ENCODE measurements at regions of chr5 and their contacts with region 1.

Region 1: GRCh38 chr5:171913987-171914273 is 92.5 kb downstream of the FBXW11 start:
- DNase-seq: no peak
- ATAC-seq: no peak
- H3K4me3 Mint-ChIP-seq: no peak overlapping the region
- H3K27ac Mint-ChIP-seq: peak overlapping the region; percentile 75
- H3K4me1 Mint-ChIP-seq: peaks cover 52% of the 10 kb centered on the region
- H3K27me3 Mint-ChIP-seq: no peaks in the 10 kb centered on the region
- CTCF ChIP-seq: no peak

Region 2: GRCh38 chr5:171806976-171807747 is 106.8 kb before region 1 on chr5:
- CTCF ChIA-PET with region 1: no interaction called
- POLR2A ChIA-PET with region 1: no interaction called
- intact Hi-C with region 1: no loop called
- DNase-seq: no peak
- ATAC-seq: no peak
- H3K4me3 Mint-ChIP-seq: peak overlapping the region; percentile 26
- H3K27ac Mint-ChIP-seq: no peak overlapping the region
- H3K4me1 Mint-ChIP-seq: peaks cover 3% of the 10 kb centered on the region
- H3K27me3 Mint-ChIP-seq: peaks cover 31% of the 10 kb centered on the region
- CTCF ChIP-seq: no peak

Region 3: DNA sequence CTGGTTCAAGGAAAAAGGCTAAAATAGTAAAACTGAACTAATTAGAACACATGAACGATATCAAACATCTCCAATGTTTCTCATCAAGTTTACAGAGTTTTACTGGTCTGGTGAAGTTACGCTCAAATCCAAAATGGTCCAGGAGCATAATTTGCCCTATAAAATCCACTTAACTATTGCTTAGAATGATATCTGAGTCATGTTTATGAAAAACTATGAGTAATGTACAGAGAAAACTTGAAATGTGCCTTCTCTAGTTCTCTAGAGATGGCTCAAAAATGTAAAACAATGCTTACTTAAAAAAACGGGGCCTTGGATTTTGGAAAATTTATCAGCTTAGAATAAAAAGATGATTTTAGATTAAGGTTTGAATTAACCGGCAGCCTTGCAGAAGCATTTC is 15.5 kb before region 1 on chr5:
- CTCF ChIA-PET with region 1: interaction called, 11 read pairs
- POLR2A ChIA-PET with region 1: no interaction called
- intact Hi-C with region 1: no loop called
- DNase-seq: no peak
- ATAC-seq: no peak
- H3K4me3 Mint-ChIP-seq: no peak overlapping the region
- H3K27ac Mint-ChIP-seq: no peak overlapping the region
- H3K4me1 Mint-ChIP-seq: peaks cover 55% of the 10 kb centered on the region
- H3K27me3 Mint-ChIP-seq: no peaks in the 10 kb centered on the region
- CTCF ChIP-seq: no peak

Region 4: DNA sequence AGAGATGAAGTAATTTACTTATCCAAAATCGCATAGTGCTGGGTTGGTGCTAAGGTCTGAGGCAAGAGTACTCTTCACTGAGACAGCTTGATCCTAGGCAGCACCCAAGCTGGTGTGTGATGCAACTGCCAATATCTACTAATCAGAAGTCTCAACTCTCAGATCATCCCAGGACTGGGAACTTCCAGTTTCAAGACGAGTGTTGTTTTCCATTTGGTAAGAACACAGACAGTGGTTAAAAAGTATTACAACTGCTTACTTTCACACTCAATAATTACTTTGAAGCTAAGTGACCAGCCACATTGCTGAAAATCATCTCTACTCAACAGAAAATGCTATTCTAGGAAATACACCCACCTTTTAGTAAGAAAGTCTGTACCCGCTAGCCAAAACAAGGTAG is 47.2 kb after region 1 on chr5:
- CTCF ChIA-PET with region 1: interaction called, 15 read pairs
- POLR2A ChIA-PET with region 1: no interaction called
- intact Hi-C with region 1: loop called (anchors 5 kb)
- DNase-seq: peak; percentile 81
- ATAC-seq: peak; percentile 67
- H3K4me3 Mint-ChIP-seq: peak overlapping the region; percentile 47
- H3K27ac Mint-ChIP-seq: peak overlapping the region; percentile 86
- H3K4me1 Mint-ChIP-seq: peaks cover 90% of the 10 kb centered on the region
- H3K27me3 Mint-ChIP-seq: no peaks in the 10 kb centered on the region
- CTCF ChIP-seq: no peak

Region 5: DNA sequence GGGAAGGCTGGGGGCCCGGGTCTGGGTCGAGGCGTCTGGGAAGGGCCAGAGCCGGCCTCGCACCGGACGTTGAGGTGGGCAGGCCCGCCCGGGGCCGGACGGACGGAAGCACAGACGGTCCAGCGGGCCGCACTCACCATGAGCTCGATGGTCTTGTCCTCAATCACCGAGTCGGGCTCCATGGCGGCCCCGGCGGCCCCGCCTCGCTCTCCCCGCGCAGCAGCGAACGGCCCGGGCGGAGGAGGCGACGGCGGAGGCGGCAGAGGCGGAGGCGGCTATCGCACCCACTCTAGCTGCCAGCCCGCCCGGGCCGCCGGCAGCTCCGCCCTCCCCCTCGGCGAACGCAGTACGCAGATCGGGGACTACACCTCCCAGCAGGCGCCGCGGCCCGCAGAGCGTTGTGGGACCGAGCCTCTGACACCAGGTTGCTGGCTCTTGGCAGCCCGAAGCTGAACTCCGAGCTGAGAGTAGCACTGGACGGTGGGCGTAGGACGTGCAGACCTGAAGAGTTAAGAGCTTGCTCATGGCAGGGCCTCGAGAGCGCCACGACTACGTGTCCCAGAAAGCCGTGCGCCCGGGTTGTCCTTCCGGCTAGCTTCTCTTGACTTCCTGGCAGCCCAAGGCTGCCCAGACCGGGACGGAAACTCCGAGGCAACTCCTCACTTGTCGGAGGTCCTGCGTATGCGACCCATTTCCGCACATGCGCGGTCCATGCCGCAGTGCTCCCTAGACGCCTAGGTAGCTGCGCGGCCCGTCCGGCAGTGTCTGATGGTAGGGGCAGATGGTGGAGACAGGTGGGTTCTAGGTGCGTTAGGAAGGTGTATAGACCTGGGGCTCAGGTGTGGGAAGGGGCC is 92.6 kb after region 1 on chr5 and contains the start of gene FBXW11:
- CTCF ChIA-PET with region 1: interaction called, 77 read pairs
- POLR2A ChIA-PET with region 1: interaction called, 23 read pairs
- intact Hi-C with region 1: loop called (anchors 5 kb)
- DNase-seq: peak; percentile 97
- ATAC-seq: peak; percentile 84
- H3K4me3 Mint-ChIP-seq: peak within 1 kb of the TSS; percentile 98
- H3K27ac Mint-ChIP-seq: peak within 1 kb of the TSS; percentile 97
- H3K4me1 Mint-ChIP-seq: peaks cover 53% of the 10 kb centered on the region
- H3K27me3 Mint-ChIP-seq: no peaks in the 10 kb centered on the region
- CTCF ChIP-seq: no peak
- total RNA-seq, gene FBXW11: 49.3 to 52.6 TPM

Region 6: GRCh38 chr5:172044631-172045314 is 130.8 kb after region 1 on chr5:
- CTCF ChIA-PET with region 1: interaction called, 84 read pairs
- POLR2A ChIA-PET with region 1: no interaction called
- intact Hi-C with region 1: loop called (anchors 1 kb)
- DNase-seq: no peak
- ATAC-seq: no peak
- H3K4me3 Mint-ChIP-seq: no peak overlapping the region
- H3K27ac Mint-ChIP-seq: peak overlapping the region; percentile 67
- H3K4me1 Mint-ChIP-seq: peaks cover 20% of the 10 kb centered on the region
- H3K27me3 Mint-ChIP-seq: no peaks in the 10 kb centered on the region
- CTCF ChIP-seq: no peak

Region 7: DNA sequence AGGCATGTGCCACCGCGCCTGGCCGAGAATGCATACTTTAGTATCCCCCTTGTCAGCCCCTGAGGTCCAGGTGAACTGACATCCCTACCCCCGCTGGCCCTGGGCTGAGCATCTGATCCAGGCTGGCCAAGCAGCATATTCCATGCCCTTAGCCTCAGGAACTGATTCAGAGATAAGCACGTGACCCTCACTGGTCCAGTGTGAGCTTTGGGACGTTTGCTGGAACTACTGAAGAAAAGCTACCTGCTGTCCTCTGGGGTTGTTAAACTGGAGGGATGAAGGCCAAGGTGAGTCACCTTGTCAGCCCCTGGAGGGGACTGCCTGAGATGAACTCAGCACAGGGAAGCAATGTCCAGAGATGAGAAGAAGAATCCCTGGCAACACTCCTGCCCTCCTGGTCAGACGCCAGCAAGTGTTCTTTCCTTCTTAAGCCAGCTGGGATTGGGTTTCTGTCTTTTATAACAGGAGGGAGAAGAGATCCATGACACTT is 151.6 kb after region 1 on chr5:
- CTCF ChIA-PET with region 1: interaction called, 42 read pairs
- POLR2A ChIA-PET with region 1: no interaction called
- intact Hi-C with region 1: no loop called
- DNase-seq: no peak
- ATAC-seq: no peak
- H3K4me3 Mint-ChIP-seq: no peak overlapping the region
- H3K27ac Mint-ChIP-seq: peak overlapping the region; percentile 85
- H3K4me1 Mint-ChIP-seq: peaks cover 55% of the 10 kb centered on the region
- H3K27me3 Mint-ChIP-seq: no peaks in the 10 kb centered on the region
- CTCF ChIP-seq: no peak

Measured in activated CD8-positive, alpha-beta T cell treated with anti-CD3 and anti-CD28 coated beads for 36 hours (primary cell).